ENCODE measurements at regions of chr18 and their contacts with region 1.

Region 1: GRCh38 chr18:2906704-2907549 is 60.1 kb downstream of the EMILIN2 start:
- DNase-seq: peak; percentile 56 to 65 (median 59)
- H3K4me3 ChIP-seq: peak overlapping the region in 1 of 2 donors; percentile 57
- H3K4me3 Mint-ChIP-seq: peak overlapping the region; percentile 83 to 89 (median 84)
- H3K27ac ChIP-seq: peak overlapping the region; percentile 67
- H3K27ac Mint-ChIP-seq: peak overlapping the region; percentile 88 to 94 (median 89)
- H3K4me1 ChIP-seq: peaks cover 20% of the 10 kb centered on the region
- H3K4me1 Mint-ChIP-seq: peaks cover 12 to 31% (median 23%) of the 10 kb centered on the region in 4 donors
- H3K27me3 ChIP-seq: no peaks in the 10 kb centered on the region
- H3K27me3 Mint-ChIP-seq: no peaks in the 10 kb centered on the region

Region 2: GRCh38 chr18:2805970-2806943 is 100.7 kb before region 1 on chr18:
- CTCF ChIA-PET with region 1: no interaction called
- POLR2A ChIA-PET with region 1: interaction called, 3 read pairs
- intact Hi-C with region 1: loop called (anchors 5 kb)
- DNase-seq: no peak
- H3K4me3 ChIP-seq: no peak overlapping the region
- H3K4me3 Mint-ChIP-seq: no peak overlapping the region
- H3K27ac ChIP-seq: no peak overlapping the region
- H3K27ac Mint-ChIP-seq: peak overlapping the region in 3 of 7 donors; percentile 31 to 77 (median 71)
- H3K4me1 ChIP-seq: no peaks in the 10 kb centered on the region
- H3K4me1 Mint-ChIP-seq: peaks cover 0 to 1% (median 0%) of the 10 kb centered on the region in 4 donors
- H3K27me3 ChIP-seq: no peaks in the 10 kb centered on the region
- H3K27me3 Mint-ChIP-seq: no peaks in the 10 kb centered on the region

Region 3: DNA sequence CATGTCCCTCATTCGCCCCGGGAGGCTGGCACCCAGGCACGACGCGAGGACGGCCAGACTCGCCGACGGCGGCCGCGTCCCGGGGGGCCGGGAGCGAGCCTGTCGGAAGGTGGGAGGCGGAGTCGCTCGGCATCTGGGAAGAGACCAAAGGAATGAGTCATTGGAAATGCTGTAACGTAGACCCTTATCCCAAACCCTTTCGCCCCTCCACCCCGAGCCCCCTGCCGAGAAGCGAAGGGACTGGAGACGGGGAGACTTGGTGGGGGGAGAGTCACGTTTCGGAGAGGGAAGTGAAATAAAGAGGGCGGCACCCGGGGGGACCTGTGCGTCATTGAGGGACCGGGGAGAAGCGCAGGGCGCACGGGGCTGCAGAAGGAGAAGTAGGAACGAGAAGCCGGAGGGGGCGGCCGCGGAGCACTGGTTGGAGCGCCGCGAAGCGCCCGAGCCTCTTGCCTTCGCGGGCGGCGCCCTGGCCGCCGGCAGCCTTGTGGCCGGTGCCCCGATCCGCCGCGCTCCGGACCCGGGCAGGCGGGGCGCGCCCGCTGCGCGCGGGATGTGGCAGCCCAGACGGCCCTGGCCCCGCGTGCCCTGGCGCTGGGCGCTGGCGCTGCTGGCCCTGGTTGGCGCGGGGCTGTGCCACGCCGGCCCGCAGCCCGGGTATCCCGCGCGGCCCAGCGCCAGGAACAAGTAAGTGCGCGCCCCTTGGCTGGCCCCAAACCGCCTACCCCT is 60.1 kb before region 1 on chr18 and contains the start of gene EMILIN2:
- CTCF ChIA-PET with region 1: no interaction called
- POLR2A ChIA-PET with region 1: interaction called, 5 read pairs
- intact Hi-C with region 1: loop called (anchors 2 kb)
- DNase-seq: peak; percentile 32 to 58 (median 37)
- H3K4me3 ChIP-seq: peak within 1 kb of the TSS; percentile 23 to 64
- H3K4me3 Mint-ChIP-seq: peak within 1 kb of the TSS; percentile 86 to 94 (median 91)
- H3K27ac ChIP-seq: no peak within 1 kb of the TSS
- H3K27ac Mint-ChIP-seq: peak within 1 kb of the TSS in 5 of 7 donors; percentile 35 to 73 (median 65)
- H3K4me1 ChIP-seq: peaks cover 29% of the 10 kb centered on the region
- H3K4me1 Mint-ChIP-seq: peaks cover 15 to 24% (median 21%) of the 10 kb centered on the region in 4 donors
- H3K27me3 ChIP-seq: peaks cover 21% of the 10 kb centered on the region
- H3K27me3 Mint-ChIP-seq: peaks cover 33 to 35% of the 10 kb centered on the region in 2 donors
- total RNA-seq, gene EMILIN2: 9.5 to 11.4 TPM

Region 4: GRCh38 chr18:2857491-2858131 is 49.3 kb before region 1 on chr18:
- CTCF ChIA-PET with region 1: no interaction called
- POLR2A ChIA-PET with region 1: no interaction called
- intact Hi-C with region 1: no loop called
- DNase-seq: no peak
- H3K4me3 ChIP-seq: no peak overlapping the region
- H3K4me3 Mint-ChIP-seq: no peak overlapping the region
- H3K27ac ChIP-seq: no peak overlapping the region
- H3K27ac Mint-ChIP-seq: no peak overlapping the region
- H3K4me1 ChIP-seq: peaks cover 9% of the 10 kb centered on the region
- H3K4me1 Mint-ChIP-seq: peaks cover 4 to 9% (median 5%) of the 10 kb centered on the region in 4 donors
- H3K27me3 ChIP-seq: no peaks in the 10 kb centered on the region
- H3K27me3 Mint-ChIP-seq: peaks cover 2 to 4% of the 10 kb centered on the region in 2 donors

Region 5: GRCh38 chr18:2881088-2881839 is 25.7 kb before region 1 on chr18:
- CTCF ChIA-PET with region 1: interaction called, 7 read pairs
- POLR2A ChIA-PET with region 1: interaction called, 14 read pairs
- intact Hi-C with region 1: no loop called
- DNase-seq: no peak
- H3K4me3 ChIP-seq: no peak overlapping the region
- H3K4me3 Mint-ChIP-seq: peak overlapping the region; percentile 80 to 88 (median 82)
- H3K27ac ChIP-seq: peak overlapping the region; percentile 57
- H3K27ac Mint-ChIP-seq: peak overlapping the region; percentile 87 to 93 (median 90)
- H3K4me1 ChIP-seq: peaks cover 44% of the 10 kb centered on the region
- H3K4me1 Mint-ChIP-seq: peaks cover 20 to 60% (median 33%) of the 10 kb centered on the region in 4 donors
- H3K27me3 ChIP-seq: no peaks in the 10 kb centered on the region
- H3K27me3 Mint-ChIP-seq: no peaks in the 10 kb centered on the region

Region 6: GRCh38 chr18:2889761-2890192 is 17.1 kb before region 1 on chr18:
- CTCF ChIA-PET with region 1: interaction called, 7 read pairs
- POLR2A ChIA-PET with region 1: interaction called, 10 read pairs
- intact Hi-C with region 1: loop called (anchors 2 kb)
- DNase-seq: peak; percentile 67 to 81 (median 76)
- H3K4me3 ChIP-seq: no peak overlapping the region
- H3K4me3 Mint-ChIP-seq: peak overlapping the region in 7 of 8 donors; percentile 4 to 90 (median 68)
- H3K27ac ChIP-seq: peak overlapping the region; percentile 49
- H3K27ac Mint-ChIP-seq: peak overlapping the region; percentile 83 to 98 (median 96)
- H3K4me1 ChIP-seq: peaks cover 54% of the 10 kb centered on the region
- H3K4me1 Mint-ChIP-seq: peaks cover 41 to 71% (median 56%) of the 10 kb centered on the region in 4 donors
- H3K27me3 ChIP-seq: no peaks in the 10 kb centered on the region
- H3K27me3 Mint-ChIP-seq: no peaks in the 10 kb centered on the region

Measured in CD4-positive, alpha-beta memory T cell (primary cell).